ENCODE measurements at regions of chr2 and their contacts with region 1.

Region 1: GRCh38 chr2:120470041-120470965 is 124.4 kb downstream of the INHBB start:
- DNase-seq: peak; percentile 66 to 96
- H3K4me3 ChIP-seq: no peak overlapping the region
- H3K27ac ChIP-seq: peak overlapping the region; percentile 85 to 91
- H3K4me1 ChIP-seq: peaks cover 20 to 38% of the 10 kb centered on the region in 2 donors
- H3K27me3 ChIP-seq: no peaks in the 10 kb centered on the region
- CTCF ChIP-seq: no peak

Region 2: DNA sequence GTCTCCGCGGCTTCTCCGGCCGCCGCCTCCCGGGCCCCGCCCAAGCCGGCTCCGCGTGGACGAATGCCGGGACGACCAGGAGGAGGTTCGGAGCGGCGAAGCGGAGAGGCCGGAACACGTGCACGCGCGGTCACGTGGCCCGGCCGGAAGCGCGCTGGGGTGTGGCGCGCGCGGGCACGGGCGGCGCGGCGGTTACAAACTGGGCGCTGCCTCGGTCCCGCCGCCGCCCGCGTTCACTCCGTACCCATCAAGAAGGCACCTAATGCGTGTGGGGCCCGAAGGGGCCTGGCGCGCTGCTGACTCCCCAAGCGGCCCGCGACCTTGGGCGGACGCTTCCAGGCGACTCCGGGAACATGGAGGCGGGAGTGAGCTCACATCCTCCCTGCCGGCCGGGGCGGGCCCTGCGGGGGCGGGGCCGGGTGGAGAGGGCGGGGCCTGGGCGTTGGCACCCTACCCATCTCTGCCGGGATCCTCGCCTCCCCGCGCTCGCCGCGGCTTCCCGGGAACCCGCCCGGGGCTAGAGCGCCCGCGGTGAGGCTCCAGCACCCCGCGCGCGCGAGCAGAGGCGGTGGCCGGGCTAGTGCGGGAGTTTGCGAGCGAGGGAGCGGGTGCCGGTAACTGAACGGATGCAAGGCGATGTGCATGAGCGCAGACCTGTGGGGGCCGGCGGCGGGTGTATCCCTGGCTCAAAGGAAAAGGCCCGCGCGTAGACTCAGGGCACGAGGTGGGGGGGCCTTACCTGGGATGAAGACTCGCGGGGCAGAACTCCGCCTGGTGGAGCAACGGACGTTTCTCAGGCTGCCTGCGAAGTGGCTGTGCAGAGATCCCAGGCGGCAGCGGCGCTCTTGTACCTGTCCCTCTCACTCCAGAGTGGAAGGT is 247.0 kb before region 1 on chr2 and contains the start of gene TMEM185B:
- intact Hi-C with region 1: loop called (anchors 2 kb)
- DNase-seq: peak; percentile 63 to 94
- H3K4me3 ChIP-seq: peak within 1 kb of the TSS; percentile 65 to 76
- H3K27ac ChIP-seq: peak within 1 kb of the TSS; percentile 82 to 89
- H3K4me1 ChIP-seq: peaks cover 0 to 10% of the 10 kb centered on the region in 2 donors
- H3K27me3 ChIP-seq: no peaks in the 10 kb centered on the region
- CTCF ChIP-seq: peak in 2 of 3 experiments; percentile 19 to 20
- total RNA-seq, gene TMEM185B: 31.8 TPM

Region 3: GRCh38 chr2:120441744-120442471 is 28.4 kb before region 1 on chr2:
- intact Hi-C with region 1: loop called (anchors 2 kb)
- DNase-seq: peak in 1 of 2 donors; percentile 78
- H3K4me3 ChIP-seq: peak overlapping the region; percentile 41 to 64
- H3K27ac ChIP-seq: no peak overlapping the region
- H3K4me1 ChIP-seq: peaks cover 6 to 7% of the 10 kb centered on the region in 2 donors
- H3K27me3 ChIP-seq: peaks cover 6% of the 10 kb centered on the region
- CTCF ChIP-seq: no peak

Region 4: GRCh38 chr2:120539937-120540718 is 69.8 kb after region 1 on chr2:
- intact Hi-C with region 1: loop called (anchors 1 kb)
- DNase-seq: peak; percentile 59 to 96
- H3K4me3 ChIP-seq: peak overlapping the region in 1 of 2 donors; percentile 2
- H3K27ac ChIP-seq: peak overlapping the region; percentile 9 to 43
- H3K4me1 ChIP-seq: peaks cover 10 to 19% of the 10 kb centered on the region in 2 donors
- H3K27me3 ChIP-seq: no peaks in the 10 kb centered on the region
- CTCF ChIP-seq: no peak

Region 5: GRCh38 chr2:120566331-120567035 is 96.2 kb after region 1 on chr2:
- intact Hi-C with region 1: loop called (anchors 1 kb)
- DNase-seq: peak; percentile 60 to 93
- H3K4me3 ChIP-seq: peak overlapping the region in 1 of 2 donors; percentile 49
- H3K27ac ChIP-seq: peak overlapping the region; percentile 49 to 50
- H3K4me1 ChIP-seq: peaks cover 9 to 25% of the 10 kb centered on the region in 2 donors
- H3K27me3 ChIP-seq: no peaks in the 10 kb centered on the region
- CTCF ChIP-seq: no peak

Region 6: DNA sequence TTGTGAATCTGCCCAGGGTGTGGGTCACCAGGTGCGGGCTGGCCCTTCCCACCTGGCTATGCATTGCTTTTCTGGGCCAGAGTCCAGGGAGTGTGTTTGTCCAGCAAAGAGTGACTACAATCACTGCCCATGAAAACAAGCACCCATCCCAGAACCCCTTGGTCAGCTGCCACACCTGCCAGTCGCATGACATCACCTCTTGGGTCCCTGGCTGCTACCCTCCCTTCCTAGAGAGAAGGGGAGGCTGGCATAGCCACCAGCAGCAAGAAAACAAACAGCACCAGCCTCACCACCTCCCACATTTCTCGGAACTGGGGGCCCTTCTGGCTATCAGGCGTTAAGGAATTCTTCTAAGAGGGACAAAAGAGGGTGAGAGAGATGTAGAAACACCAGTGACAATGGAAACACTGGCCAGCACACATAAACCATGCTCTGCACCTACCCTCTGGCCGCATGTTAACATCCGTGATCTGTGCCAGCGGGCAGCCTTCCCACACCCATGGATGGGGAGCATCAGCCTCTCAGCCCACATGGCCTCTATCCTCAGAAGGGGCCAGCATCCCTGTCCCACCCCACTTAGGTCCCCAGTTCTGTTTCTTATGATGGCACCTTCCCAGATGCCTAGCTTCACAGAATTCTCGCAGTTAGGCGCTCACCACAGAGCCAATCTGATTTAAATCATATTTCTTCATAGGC is 155.7 kb after region 1 on chr2:
- intact Hi-C with region 1: loop called (anchors 5 kb)
- DNase-seq: peak; percentile 46 to 86
- H3K4me3 ChIP-seq: no peak overlapping the region
- H3K27ac ChIP-seq: peak overlapping the region; percentile 33 to 37
- H3K4me1 ChIP-seq: peaks cover 0 to 14% of the 10 kb centered on the region in 2 donors
- H3K27me3 ChIP-seq: no peaks in the 10 kb centered on the region
- CTCF ChIP-seq: no peak

Region 7: GRCh38 chr2:120693121-120693520 is 222.8 kb after region 1 on chr2:
- intact Hi-C with region 1: no loop called
- DNase-seq: no peak
- H3K4me3 ChIP-seq: no peak overlapping the region
- H3K27ac ChIP-seq: no peak overlapping the region
- H3K4me1 ChIP-seq: no peaks in the 10 kb centered on the region
- H3K27me3 ChIP-seq: no peaks in the 10 kb centered on the region
- CTCF ChIP-seq: no peak

Region 8: GRCh38 chr2:120885320-120885719 is 415.0 kb after region 1 on chr2:
- intact Hi-C with region 1: no loop called
- DNase-seq: no peak
- H3K4me3 ChIP-seq: no peak overlapping the region
- H3K27ac ChIP-seq: no peak overlapping the region
- H3K4me1 ChIP-seq: no peaks in the 10 kb centered on the region
- H3K27me3 ChIP-seq: no peaks in the 10 kb centered on the region
- CTCF ChIP-seq: no peak

Measured in ascending aorta (tissue), 2 donors.